KBM-7 (cell line): ENCODE measurements at regions of chr4 and their contacts with region 1.

Region 1: GRCh38 chr4:27066601-27067000 is 206.0 kb downstream of the STIM2 start:
- DNase-seq: peak; percentile 22

Region 2: GRCh38 chr4:27318743-27319142 is 252.1 kb after region 1 on chr4:
- in situ Hi-C with region 1: loop called (anchors 25 kb)
- DNase-seq: peak; percentile 79